ENCODE measurements at regions of chr12 and their contacts with region 1.

Region 1: GRCh38 chr12:26097046-26097878 is 27.6 kb downstream of the BHLHE41 start:
- DNase-seq: peak; percentile 81
- ATAC-seq: peak; percentile 93
- H3K4me3 ChIP-seq: no peak overlapping the region
- H3K4me3 Mint-ChIP-seq: no peak overlapping the region
- H3K27ac ChIP-seq: no peak overlapping the region
- H3K27ac Mint-ChIP-seq: no peak overlapping the region
- H3K4me1 ChIP-seq: no peaks in the 10 kb centered on the region
- H3K4me1 Mint-ChIP-seq: no peaks in the 10 kb centered on the region
- H3K27me3 ChIP-seq: no peaks in the 10 kb centered on the region
- H3K27me3 Mint-ChIP-seq: no peaks in the 10 kb centered on the region
- CTCF ChIP-seq: peak; percentile 100

Region 2: GRCh38 chr12:26113853-26114719 is 16.8 kb after region 1 on chr12:
- CTCF ChIA-PET with region 1: interaction called, 24 read pairs
- POLR2A ChIA-PET with region 1: no interaction called
- intact Hi-C with region 1: loop called (anchors 2 kb)
- DNase-seq: peak; percentile 94
- ATAC-seq: peak; percentile 80
- H3K4me3 ChIP-seq: peak overlapping the region in 4 of 5 experiments; percentile 67 to 80 (median 70)
- H3K4me3 Mint-ChIP-seq: peak overlapping the region; percentile 87
- H3K27ac ChIP-seq: peak overlapping the region; percentile 91 to 95
- H3K27ac Mint-ChIP-seq: peak overlapping the region; percentile 75
- H3K4me1 ChIP-seq: peaks cover 36 to 47% of the 10 kb centered on the region in 2 donors
- H3K4me1 Mint-ChIP-seq: peaks cover 49% of the 10 kb centered on the region
- H3K27me3 ChIP-seq: no peaks in the 10 kb centered on the region
- H3K27me3 Mint-ChIP-seq: no peaks in the 10 kb centered on the region
- CTCF ChIP-seq: peak; percentile 48

Region 3: DNA sequence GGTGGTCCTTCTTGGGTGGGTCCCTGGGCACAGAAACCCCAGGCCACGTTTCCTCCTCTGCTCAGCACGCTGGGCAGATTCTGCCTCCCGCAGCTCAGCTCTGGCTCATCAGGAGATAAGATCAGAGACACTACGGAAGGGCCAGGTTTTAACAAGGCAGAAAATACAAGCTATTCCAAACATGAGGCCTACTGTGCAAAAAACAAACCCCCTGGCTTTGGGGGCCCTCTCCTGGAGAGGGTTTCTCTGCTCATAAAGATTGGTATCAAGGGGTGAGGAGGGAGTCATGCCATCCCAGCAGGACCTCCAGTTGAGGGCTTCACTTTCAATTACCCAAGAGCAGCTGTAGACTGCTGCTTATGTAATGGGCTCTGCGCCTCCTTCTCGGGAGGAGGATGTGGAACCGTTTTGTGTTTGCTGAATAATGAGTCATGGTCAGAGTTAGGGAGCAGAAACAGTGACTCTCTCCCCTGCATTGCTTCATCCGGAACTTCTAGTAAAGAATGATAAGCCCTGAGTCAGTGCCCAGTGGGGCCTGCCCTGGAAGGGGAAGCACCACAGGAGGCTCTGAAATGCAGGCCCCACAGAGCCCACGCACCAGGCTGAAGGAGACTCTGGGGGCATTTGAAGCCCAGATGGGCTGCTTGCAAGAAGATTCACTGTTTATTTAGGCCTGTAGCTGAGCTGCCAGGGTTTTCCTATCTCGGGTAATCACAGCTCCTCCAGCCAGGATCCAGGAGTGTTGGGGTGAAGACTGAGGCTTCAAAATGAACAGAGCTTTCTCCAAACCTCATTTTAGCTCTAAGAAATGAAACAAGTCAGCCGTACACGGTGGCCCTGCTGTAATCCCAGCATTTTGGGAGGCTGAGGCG is 177.4 kb after region 1 on chr12:
- CTCF ChIA-PET with region 1: interaction called, 7 read pairs
- POLR2A ChIA-PET with region 1: no interaction called
- intact Hi-C with region 1: loop called (anchors 1 kb)
- DNase-seq: peak; percentile 58
- ATAC-seq: peak; percentile 96
- H3K4me3 ChIP-seq: no peak overlapping the region
- H3K4me3 Mint-ChIP-seq: peak overlapping the region; percentile 18
- H3K27ac ChIP-seq: no peak overlapping the region
- H3K27ac Mint-ChIP-seq: peak overlapping the region; percentile 78
- H3K4me1 ChIP-seq: peaks cover 16 to 28% of the 10 kb centered on the region in 2 donors
- H3K4me1 Mint-ChIP-seq: peaks cover 43% of the 10 kb centered on the region
- H3K27me3 ChIP-seq: no peaks in the 10 kb centered on the region
- H3K27me3 Mint-ChIP-seq: no peaks in the 10 kb centered on the region
- CTCF ChIP-seq: no peak

Region 4: GRCh38 chr12:26286186-26286585 is 188.9 kb after region 1 on chr12:
- CTCF ChIA-PET with region 1: no interaction called
- POLR2A ChIA-PET with region 1: no interaction called
- intact Hi-C with region 1: no loop called
- DNase-seq: no peak
- ATAC-seq: no peak
- H3K4me3 ChIP-seq: no peak overlapping the region
- H3K4me3 Mint-ChIP-seq: no peak overlapping the region
- H3K27ac ChIP-seq: no peak overlapping the region
- H3K27ac Mint-ChIP-seq: no peak overlapping the region
- H3K4me1 ChIP-seq: no peaks in the 10 kb centered on the region
- H3K4me1 Mint-ChIP-seq: peaks cover 1% of the 10 kb centered on the region
- H3K27me3 ChIP-seq: no peaks in the 10 kb centered on the region
- H3K27me3 Mint-ChIP-seq: no peaks in the 10 kb centered on the region
- CTCF ChIP-seq: no peak

Region 5: DNA sequence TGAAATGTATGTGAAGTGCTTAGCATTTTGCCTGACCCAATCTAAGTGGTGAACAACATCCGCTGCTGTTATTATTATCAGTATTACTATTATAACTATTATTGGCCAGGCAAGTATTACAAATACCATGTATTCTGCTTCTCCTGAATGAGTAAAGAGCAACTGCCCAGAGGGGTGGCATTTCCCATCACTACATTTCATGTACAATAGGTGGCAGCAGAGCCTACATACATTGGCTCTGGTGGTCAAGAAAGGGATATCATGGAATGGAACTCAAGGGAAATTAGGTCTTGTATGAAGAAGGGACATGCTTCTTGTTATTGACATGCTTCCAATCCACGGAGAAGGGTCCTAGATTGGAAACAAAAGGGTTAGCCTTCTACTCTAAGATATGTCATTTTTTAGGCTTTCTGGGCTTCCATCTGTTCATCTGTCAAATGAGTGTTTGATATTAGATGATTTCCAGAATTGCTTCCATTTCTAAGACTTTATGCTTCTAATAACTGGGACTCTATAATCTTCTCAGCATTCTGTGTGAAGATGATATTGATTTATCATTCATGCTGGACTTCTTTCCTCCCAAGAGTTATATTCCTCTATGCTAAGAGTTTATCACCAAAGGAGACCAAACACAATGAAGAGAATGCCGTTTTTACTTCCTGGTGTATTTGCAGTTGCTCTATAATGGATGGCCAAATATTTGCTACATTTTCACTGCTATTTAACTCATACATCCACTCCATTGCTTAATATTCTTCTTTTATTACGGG is 337.2 kb after region 1 on chr12:
- CTCF ChIA-PET with region 1: interaction called, 9 read pairs
- POLR2A ChIA-PET with region 1: no interaction called
- intact Hi-C with region 1: loop called (anchors 2 kb)
- DNase-seq: peak; percentile 61
- ATAC-seq: peak; percentile 61
- H3K4me3 ChIP-seq: no peak overlapping the region
- H3K4me3 Mint-ChIP-seq: no peak overlapping the region
- H3K27ac ChIP-seq: no peak overlapping the region
- H3K27ac Mint-ChIP-seq: peak overlapping the region; percentile 11
- H3K4me1 ChIP-seq: no peaks in the 10 kb centered on the region
- H3K4me1 Mint-ChIP-seq: no peaks in the 10 kb centered on the region
- H3K27me3 ChIP-seq: no peaks in the 10 kb centered on the region
- H3K27me3 Mint-ChIP-seq: no peaks in the 10 kb centered on the region
- CTCF ChIP-seq: peak; percentile 83

Region 6: DNA sequence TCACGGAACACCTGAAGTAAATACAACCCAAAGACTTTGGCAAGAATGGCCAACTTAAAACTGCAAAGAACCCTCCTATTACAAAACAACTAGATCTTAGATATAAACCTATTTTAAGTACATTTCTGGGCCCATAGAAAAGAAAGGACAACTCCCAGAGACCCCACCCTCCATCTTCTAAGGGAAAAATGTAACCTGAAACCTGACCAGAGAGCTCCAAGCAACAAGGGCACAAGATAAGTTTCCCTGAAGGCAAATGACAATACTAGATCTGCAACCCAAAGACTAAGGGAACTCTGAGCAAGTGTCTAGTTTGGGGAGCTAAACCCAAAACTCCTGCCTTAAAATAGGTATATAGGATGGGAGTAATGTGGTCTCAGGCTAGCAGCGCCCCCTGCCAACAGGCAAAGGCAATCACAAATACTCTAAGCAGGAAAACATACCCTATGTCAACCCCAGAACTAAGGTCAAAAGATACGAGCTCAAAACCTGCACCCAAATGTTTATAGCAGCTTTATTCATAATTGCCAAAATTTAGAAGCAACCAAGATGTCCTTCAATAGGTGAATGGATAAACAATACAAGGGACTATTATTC is 516.9 kb after region 1 on chr12:
- CTCF ChIA-PET with region 1: interaction called, 12 read pairs
- POLR2A ChIA-PET with region 1: no interaction called
- intact Hi-C with region 1: loop called (anchors 1 kb)
- DNase-seq: peak; percentile 51
- ATAC-seq: no peak
- H3K4me3 ChIP-seq: no peak overlapping the region
- H3K4me3 Mint-ChIP-seq: no peak overlapping the region
- H3K27ac ChIP-seq: no peak overlapping the region
- H3K27ac Mint-ChIP-seq: no peak overlapping the region
- H3K4me1 ChIP-seq: no peaks in the 10 kb centered on the region
- H3K4me1 Mint-ChIP-seq: no peaks in the 10 kb centered on the region
- H3K27me3 ChIP-seq: no peaks in the 10 kb centered on the region
- H3K27me3 Mint-ChIP-seq: no peaks in the 10 kb centered on the region
- CTCF ChIP-seq: peak; percentile 58

Region 7: GRCh38 chr12:26701604-26702215 is 604.4 kb after region 1 on chr12:
- CTCF ChIA-PET with region 1: interaction called, 5 read pairs
- POLR2A ChIA-PET with region 1: no interaction called
- intact Hi-C with region 1: loop called (anchors 1 kb)
- DNase-seq: peak; percentile 55
- ATAC-seq: no peak
- H3K4me3 ChIP-seq: no peak overlapping the region
- H3K4me3 Mint-ChIP-seq: no peak overlapping the region
- H3K27ac ChIP-seq: no peak overlapping the region
- H3K27ac Mint-ChIP-seq: no peak overlapping the region
- H3K4me1 ChIP-seq: peaks cover 11 to 14% of the 10 kb centered on the region in 2 donors
- H3K4me1 Mint-ChIP-seq: peaks cover 9% of the 10 kb centered on the region
- H3K27me3 ChIP-seq: no peaks in the 10 kb centered on the region
- H3K27me3 Mint-ChIP-seq: no peaks in the 10 kb centered on the region
- CTCF ChIP-seq: peak; percentile 87